Activated CD8-positive, alpha-beta T cell treated with anti-CD3 and anti-CD28 coated beads for 36 hours (primary cell): ENCODE measurements at regions of chr12 and their contacts with region 1.

Region 1: GRCh38 chr12:94207849-94208621 is 59.7 kb downstream of the PLXNC1 start:
- DNase-seq: peak; percentile 65
- ATAC-seq: peak; percentile 77
- H3K4me3 Mint-ChIP-seq: peak overlapping the region; percentile 71
- H3K27ac Mint-ChIP-seq: peak overlapping the region; percentile 96
- H3K4me1 Mint-ChIP-seq: peaks cover 67% of the 10 kb centered on the region
- H3K27me3 Mint-ChIP-seq: no peaks in the 10 kb centered on the region
- CTCF ChIP-seq: no peak

Region 2: GRCh38 chr12:94149119-94149780 is 58.8 kb before region 1 on chr12:
- CTCF ChIA-PET with region 1: interaction called, 19 read pairs
- POLR2A ChIA-PET with region 1: interaction called, 17 read pairs
- intact Hi-C with region 1: loop called (anchors 5 kb)
- DNase-seq: peak; percentile 58
- ATAC-seq: peak; percentile 22
- H3K4me3 Mint-ChIP-seq: peak overlapping the region; percentile 87
- H3K27ac Mint-ChIP-seq: no peak overlapping the region
- H3K4me1 Mint-ChIP-seq: peaks cover 24% of the 10 kb centered on the region
- H3K27me3 Mint-ChIP-seq: peaks cover 24% of the 10 kb centered on the region
- CTCF ChIP-seq: peak; percentile 70

Region 3: GRCh38 chr12:94172973-94173372 is 35.1 kb before region 1 on chr12:
- CTCF ChIA-PET with region 1: interaction called, 3 read pairs
- POLR2A ChIA-PET with region 1: interaction called, 21 read pairs
- intact Hi-C with region 1: loop called (anchors 5 kb)
- DNase-seq: no peak
- ATAC-seq: no peak
- H3K4me3 Mint-ChIP-seq: no peak overlapping the region
- H3K27ac Mint-ChIP-seq: no peak overlapping the region
- H3K4me1 Mint-ChIP-seq: peaks cover 72% of the 10 kb centered on the region
- H3K27me3 Mint-ChIP-seq: no peaks in the 10 kb centered on the region
- CTCF ChIP-seq: no peak

Region 4: GRCh38 chr12:94228488-94228907 is 20.5 kb after region 1 on chr12:
- CTCF ChIA-PET with region 1: no interaction called
- POLR2A ChIA-PET with region 1: no interaction called
- intact Hi-C with region 1: no loop called
- DNase-seq: no peak
- ATAC-seq: no peak
- H3K4me3 Mint-ChIP-seq: no peak overlapping the region
- H3K27ac Mint-ChIP-seq: no peak overlapping the region
- H3K4me1 Mint-ChIP-seq: peaks cover 12% of the 10 kb centered on the region
- H3K27me3 Mint-ChIP-seq: no peaks in the 10 kb centered on the region
- CTCF ChIP-seq: no peak

Region 5: DNA sequence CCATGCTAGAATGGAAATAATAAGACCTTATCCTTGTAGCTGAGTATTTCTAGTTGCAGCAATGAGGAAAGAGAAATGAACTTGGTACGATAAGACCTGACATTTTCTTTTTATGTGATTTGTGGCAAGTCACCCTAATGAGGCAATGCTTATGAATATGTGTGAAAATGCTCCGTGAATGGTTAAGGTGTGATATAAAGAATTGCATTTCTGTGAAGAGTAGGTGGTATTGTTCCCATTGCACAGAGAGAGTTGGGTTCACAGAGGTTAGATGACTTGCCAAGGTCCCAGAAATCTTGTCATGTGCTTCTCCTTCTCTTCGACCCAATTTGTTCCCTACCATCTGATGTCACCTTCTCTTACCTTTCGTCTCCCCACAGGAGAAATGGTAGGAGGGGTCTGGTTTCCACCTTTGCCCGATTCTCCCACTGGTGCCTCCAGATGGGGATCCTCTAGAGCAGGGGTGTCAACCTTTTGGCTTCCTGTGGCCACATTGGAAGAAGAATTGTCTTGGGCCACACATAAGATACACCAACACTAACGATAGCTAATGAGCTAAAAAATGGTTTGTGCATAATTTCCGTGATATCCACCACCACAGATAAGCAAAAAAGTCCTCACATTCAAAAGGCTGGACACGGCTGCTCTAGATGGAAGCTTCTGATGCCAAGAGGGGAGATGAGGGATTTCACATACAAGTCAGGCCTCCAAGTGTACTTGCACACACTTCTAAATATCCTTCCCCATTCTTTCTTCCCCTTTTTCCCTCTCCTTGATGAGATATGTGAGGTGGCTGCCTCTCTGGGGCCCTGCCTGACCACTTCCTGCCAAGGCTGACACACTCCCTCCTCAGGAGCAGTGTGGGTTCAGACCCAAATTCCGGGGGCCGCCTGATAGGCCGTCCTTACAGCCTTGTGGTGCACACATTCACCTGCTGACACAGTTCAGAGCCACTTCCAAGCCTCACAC is 36.4 kb after region 1 on chr12:
- CTCF ChIA-PET with region 1: interaction called, 4 read pairs
- POLR2A ChIA-PET with region 1: interaction called, 7 read pairs
- intact Hi-C with region 1: loop called (anchors 5 kb)
- DNase-seq: peak; percentile 79
- ATAC-seq: peak; percentile 85
- H3K4me3 Mint-ChIP-seq: peak overlapping the region; percentile 9
- H3K27ac Mint-ChIP-seq: peak overlapping the region; percentile 87
- H3K4me1 Mint-ChIP-seq: peaks cover 23% of the 10 kb centered on the region
- H3K27me3 Mint-ChIP-seq: no peaks in the 10 kb centered on the region
- CTCF ChIP-seq: no peak

Region 6: DNA sequence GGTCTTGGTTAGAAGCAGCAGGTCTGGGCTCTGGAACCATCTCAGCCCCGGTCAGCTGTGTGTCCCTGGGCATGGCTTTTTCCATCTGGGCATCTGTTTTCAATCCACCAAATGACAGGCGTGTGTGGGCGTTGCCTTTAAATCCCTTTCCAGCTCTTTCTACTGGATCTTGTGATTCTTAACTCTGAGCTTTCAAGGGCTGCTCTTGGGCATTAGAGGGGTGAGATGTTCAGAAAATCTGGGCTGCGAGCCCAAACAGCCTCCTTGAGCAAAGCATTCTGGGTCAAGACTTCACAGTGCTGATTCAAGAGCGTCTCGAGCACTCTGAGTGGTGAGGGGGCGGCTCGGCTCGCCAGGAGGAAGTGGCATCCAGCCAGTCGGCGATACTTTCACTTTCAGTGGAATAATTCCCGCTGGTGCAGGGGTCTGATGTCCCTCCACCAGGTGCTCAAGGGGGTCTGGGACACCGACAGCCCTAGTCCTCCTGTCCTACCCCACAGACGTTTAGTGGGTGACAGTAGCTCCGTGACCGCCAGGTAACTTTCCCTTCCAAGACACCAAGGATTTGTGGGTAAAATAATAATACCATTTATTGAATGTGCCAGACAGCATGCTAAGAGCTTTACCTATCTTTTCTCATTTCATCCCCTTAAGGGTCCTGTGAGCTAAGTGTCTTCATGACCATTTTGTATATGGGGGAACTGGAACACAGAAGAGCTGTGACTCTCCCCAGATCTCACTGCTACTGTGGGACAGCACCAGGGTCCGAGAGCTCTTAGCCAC is 54.4 kb after region 1 on chr12:
- CTCF ChIA-PET with region 1: interaction called, 10 read pairs
- POLR2A ChIA-PET with region 1: interaction called, 26 read pairs
- intact Hi-C with region 1: loop called (anchors 5 kb)
- DNase-seq: peak; percentile 90
- ATAC-seq: peak; percentile 81
- H3K4me3 Mint-ChIP-seq: peak overlapping the region; percentile 88
- H3K27ac Mint-ChIP-seq: peak overlapping the region; percentile 99
- H3K4me1 Mint-ChIP-seq: peaks cover 40% of the 10 kb centered on the region
- H3K27me3 Mint-ChIP-seq: no peaks in the 10 kb centered on the region
- CTCF ChIP-seq: no peak

Region 7: GRCh38 chr12:94269316-94269999 is 61.4 kb after region 1 on chr12:
- CTCF ChIA-PET with region 1: no interaction called
- POLR2A ChIA-PET with region 1: interaction called, 26 read pairs
- intact Hi-C with region 1: loop called (anchors 5 kb)
- DNase-seq: no peak
- ATAC-seq: peak; percentile 73
- H3K4me3 Mint-ChIP-seq: no peak overlapping the region
- H3K27ac Mint-ChIP-seq: peak overlapping the region; percentile 56
- H3K4me1 Mint-ChIP-seq: peaks cover 55% of the 10 kb centered on the region
- H3K27me3 Mint-ChIP-seq: no peaks in the 10 kb centered on the region
- CTCF ChIP-seq: no peak

Region 8: DNA sequence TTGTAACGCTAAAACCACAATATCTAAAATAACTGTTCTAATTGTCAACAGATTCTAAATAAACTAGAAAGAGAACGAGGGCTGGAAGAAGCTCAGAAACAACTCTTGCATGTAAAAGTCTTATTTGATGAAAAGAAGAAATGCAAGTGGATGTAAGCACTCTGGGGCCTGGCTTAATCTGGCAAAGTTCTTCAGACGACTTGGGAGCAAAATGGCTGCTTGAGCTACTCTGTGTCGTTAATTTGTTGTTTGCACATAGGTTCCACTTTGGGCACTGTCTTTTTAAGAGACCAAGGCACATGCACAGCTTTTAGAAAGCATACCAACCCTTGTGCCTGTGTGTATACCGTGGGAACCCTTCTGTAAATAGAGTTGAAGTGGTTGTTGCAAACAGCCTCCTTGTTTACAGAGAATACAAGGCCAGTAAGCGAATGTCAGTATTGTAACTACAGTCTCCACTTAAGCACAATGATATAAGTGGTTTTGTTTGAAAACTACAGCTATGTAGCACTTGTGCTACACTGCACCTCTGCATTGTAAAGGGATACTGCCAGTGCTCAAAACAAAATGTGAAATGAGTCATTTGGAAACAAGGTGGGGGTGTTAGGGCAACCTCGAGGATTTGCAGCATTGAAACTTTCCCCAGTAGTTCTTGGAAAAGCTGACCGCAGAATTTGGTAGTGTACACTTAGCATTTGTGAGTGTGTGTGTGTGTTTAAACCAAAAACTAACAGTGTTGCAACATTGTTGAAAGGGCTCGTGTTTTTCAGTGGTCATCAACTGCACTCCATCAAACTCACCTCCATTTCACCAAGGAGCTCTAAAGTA is 97.3 kb after region 1 on chr12:
- CTCF ChIA-PET with region 1: interaction called, 6 read pairs
- POLR2A ChIA-PET with region 1: interaction called, 7 read pairs
- intact Hi-C with region 1: loop called (anchors 5 kb)
- DNase-seq: peak; percentile 79
- ATAC-seq: peak; percentile 92
- H3K4me3 Mint-ChIP-seq: peak overlapping the region; percentile 40
- H3K27ac Mint-ChIP-seq: peak overlapping the region; percentile 75
- H3K4me1 Mint-ChIP-seq: peaks cover 48% of the 10 kb centered on the region
- H3K27me3 Mint-ChIP-seq: peaks cover 1% of the 10 kb centered on the region
- CTCF ChIP-seq: no peak